Upper lobe of right lung (tissue), 1 donor: ENCODE measurements at regions of chr1 and their contacts with region 1.

Region 1: DNA sequence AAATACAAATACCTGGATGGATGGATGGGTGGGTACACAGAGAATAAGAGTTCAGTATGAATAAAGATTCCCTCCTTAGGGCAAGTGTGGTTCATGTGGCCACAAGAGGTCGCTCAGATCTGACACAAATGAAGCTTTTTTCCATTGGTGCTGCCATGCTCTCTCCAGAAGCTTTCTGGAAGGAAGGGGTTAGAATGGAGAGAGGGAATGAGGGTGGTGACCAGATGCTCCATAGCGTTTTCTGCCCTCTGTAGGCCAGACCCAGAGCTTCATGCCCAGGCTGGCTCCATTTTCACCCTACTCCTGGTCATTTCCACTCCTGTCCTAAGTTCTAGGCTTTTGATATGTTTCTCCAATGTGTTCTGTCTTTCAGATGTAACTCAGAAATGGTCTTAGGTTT is 3.3 kb upstream of the FCRL6 start:
- DNase-seq: no peak
- ATAC-seq: peak; percentile 95
- H3K4me3 ChIP-seq: no peak overlapping the region
- H3K27ac ChIP-seq: no peak overlapping the region
- H3K4me1 ChIP-seq: peaks cover 4% of the 10 kb centered on the region
- H3K27me3 ChIP-seq: no peaks in the 10 kb centered on the region
- CTCF ChIP-seq: peak; percentile 82

Region 2: GRCh38 chr1:159891275-159892157 is 92.6 kb after region 1 on chr1:
- intact Hi-C with region 1: loop called (anchors 5 kb)
- DNase-seq: peak; percentile 90
- ATAC-seq: peak; percentile 97
- H3K4me3 ChIP-seq: no peak overlapping the region
- H3K27ac ChIP-seq: peak overlapping the region; percentile 78
- H3K4me1 ChIP-seq: peaks cover 23% of the 10 kb centered on the region
- H3K27me3 ChIP-seq: no peaks in the 10 kb centered on the region
- CTCF ChIP-seq: peak; percentile 97